PC-9 (cell line): ENCODE measurements at regions of chr1 and their contacts with region 1.

Region 1: GRCh38 chr1:95233737-95234500 is at the start of gene RWDD3:
- DNase-seq: peak; percentile 79 to 94
- H3K4me3 ChIP-seq: peak within 1 kb of the TSS; percentile 94
- H3K27ac ChIP-seq: 0 out of 2 replicates have a peak within 1 kb of the TSS, but pooled peaks have one; percentile 8
- H3K4me1 ChIP-seq: peaks cover 8% of the 10 kb centered on the region; the same call in 1 of the 2 replicates
- H3K27me3 ChIP-seq: no peaks in the 10 kb centered on the region
- CTCF ChIP-seq: peak; percentile 88
- total RNA-seq, gene RWDD3: 11.3 and 13.3 TPM in 2 replicates

Region 2: DNA sequence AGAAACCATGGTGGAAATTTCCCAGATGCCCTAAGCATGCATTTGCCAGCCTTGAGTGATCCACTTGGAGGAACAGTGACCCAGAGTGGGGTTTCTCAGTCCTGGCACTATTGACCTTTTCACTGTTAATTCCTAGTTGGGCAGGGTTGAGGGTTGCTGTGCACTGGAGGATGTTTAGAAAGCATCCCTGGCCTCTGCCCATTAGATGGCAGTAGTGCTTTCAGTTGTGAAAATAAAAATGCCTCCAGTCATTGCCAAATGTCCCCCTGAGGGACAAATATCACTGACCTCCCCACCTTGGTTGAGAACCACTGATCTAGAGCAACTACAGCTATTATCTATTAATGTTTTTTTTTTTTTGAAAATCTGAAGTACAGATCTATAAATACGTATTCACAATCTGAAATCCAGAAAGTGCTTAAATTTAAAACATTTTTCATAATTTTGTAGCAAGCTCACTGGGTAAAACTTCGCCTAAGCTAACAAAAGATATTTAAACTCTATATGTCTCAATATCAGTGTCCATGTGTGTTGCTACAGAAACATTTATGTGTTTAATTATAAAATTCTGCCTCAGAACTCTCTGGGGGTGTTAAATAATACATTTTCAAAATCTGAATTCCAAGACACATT is 719.7 kb before region 1 on chr1:
- CTCF ChIA-PET with region 1: no interaction called
- POLR2A ChIA-PET with region 1: no interaction called
- intact Hi-C with region 1: loop called (anchors 1 kb)
- DNase-seq: peak; percentile 34 to 66
- H3K4me3 ChIP-seq: no peak overlapping the region
- H3K27ac ChIP-seq: peak overlapping the region; percentile 21; the same call in 1 of the 2 replicates
- H3K4me1 ChIP-seq: peaks cover 11% of the 10 kb centered on the region
- H3K27me3 ChIP-seq: no peaks in the 10 kb centered on the region
- CTCF ChIP-seq: peak; percentile 91

Region 3: DNA sequence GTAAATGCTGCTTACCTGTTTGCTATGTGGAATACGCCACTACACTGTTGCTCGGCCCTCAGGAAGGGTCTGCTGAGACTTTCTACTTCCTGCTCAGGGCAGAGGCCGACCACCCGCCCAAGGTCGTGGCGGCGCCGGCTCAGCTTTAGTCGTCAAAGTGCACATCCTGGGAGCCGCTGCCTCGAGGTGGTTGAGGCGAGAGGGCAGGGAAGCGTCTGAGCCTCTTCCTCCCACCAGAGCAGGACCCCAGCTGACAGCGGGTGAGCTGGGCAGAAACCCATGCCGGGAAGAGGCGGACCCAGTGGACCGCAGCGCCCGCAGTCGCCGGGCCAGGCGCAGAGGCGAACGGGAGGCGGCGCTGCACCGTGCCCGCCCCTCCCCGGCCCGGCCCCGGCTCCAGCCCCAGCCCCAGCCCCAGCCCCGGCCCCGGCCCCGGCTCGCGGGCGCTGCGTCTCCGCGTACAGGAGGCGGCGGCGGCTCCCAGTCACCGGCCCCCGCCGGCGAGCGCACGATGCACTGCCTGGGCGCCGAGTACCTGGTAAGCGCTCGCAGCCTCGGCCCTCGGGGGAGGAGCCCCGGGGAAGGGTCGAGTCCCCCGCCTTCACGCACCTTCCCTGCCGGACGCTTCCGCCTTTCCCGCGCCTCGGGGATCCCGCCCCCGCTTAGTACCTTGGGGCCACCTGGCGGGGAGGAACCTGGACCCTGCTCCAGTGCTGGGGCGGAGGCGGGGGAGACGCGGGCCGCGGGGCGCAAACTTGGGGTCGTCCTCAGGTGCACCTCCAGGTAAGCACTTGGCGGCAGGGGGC is 413.8 kb before region 1 on chr1 and contains the start of gene SLC44A3:
- CTCF ChIA-PET with region 1: no interaction called
- POLR2A ChIA-PET with region 1: no interaction called
- intact Hi-C with region 1: loop called (anchors 5 kb)
- DNase-seq: peak; percentile 64 to 65
- H3K4me3 ChIP-seq: peak within 1 kb of the TSS; percentile 96
- H3K27ac ChIP-seq: peak within 1 kb of the TSS; percentile 55
- H3K4me1 ChIP-seq: peaks cover 52% of the 10 kb centered on the region
- H3K27me3 ChIP-seq: no peaks in the 10 kb centered on the region
- CTCF ChIP-seq: no peak; the same call in 1 of the 2 replicates
- total RNA-seq, gene SLC44A3: 11.0 and 17.5 TPM in 2 replicates

Region 4: DNA sequence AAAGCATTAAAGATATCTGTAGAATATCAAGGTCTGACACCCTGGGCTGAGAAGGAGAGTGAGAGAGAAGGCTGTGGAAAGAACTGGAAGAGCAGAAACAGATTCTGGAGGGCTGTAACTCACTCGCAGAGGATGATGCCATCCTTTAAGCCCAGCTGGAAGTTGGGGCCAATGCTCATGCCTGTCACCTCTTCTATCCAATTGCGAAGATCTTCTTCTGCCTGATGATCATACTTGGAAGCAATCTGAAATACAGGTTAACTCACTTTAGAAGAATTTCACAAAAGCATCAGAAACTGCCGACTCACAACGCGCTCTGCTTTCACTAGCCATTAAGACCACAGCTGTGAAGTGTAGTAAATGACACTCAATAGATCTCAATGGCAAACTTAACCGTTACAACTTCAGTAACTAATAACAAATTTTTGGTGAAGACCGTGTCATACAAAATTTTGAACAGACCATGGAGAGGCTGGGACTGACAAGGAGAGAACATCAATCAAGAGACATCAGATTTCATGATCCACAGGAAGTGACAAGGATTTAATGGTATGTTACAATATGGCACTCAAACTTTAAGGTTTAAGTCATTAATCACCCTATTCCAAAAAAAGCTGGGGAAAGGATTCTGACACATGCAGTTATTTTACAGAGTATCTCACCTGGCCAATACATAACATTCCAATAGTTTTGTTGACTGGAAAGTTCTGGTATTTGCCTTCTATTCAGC is 330.5 kb before region 1 on chr1:
- CTCF ChIA-PET with region 1: no interaction called
- POLR2A ChIA-PET with region 1: no interaction called
- intact Hi-C with region 1: no loop called
- DNase-seq: peak in 1 of 2 experiments; percentile 46
- H3K4me3 ChIP-seq: no peak overlapping the region
- H3K27ac ChIP-seq: peak overlapping the region; percentile 28; the same call in 1 of the 2 replicates
- H3K4me1 ChIP-seq: peaks cover 16% of the 10 kb centered on the region; the same call in 1 of the 2 replicates
- H3K27me3 ChIP-seq: no peaks in the 10 kb centered on the region
- CTCF ChIP-seq: no peak

Region 5: GRCh38 chr1:94926915-94927404 is 307.0 kb before region 1 on chr1 and contains the start of gene CNN3:
- CTCF ChIA-PET with region 1: no interaction called
- POLR2A ChIA-PET with region 1: no interaction called
- intact Hi-C with region 1: loop called (anchors 5 kb)
- DNase-seq: peak; percentile 80 to 95
- H3K4me3 ChIP-seq: peak within 1 kb of the TSS; percentile 67
- H3K27ac ChIP-seq: peak within 1 kb of the TSS; percentile 64
- H3K4me1 ChIP-seq: peaks cover 67% of the 10 kb centered on the region
- H3K27me3 ChIP-seq: no peaks in the 10 kb centered on the region
- CTCF ChIP-seq: no peak
- total RNA-seq, gene CNN3: 125 and 135 TPM in 2 replicates

Region 6: GRCh38 chr1:95084317-95085176 is 149.4 kb before region 1 on chr1:
- CTCF ChIA-PET with region 1: interaction called, 14 read pairs
- POLR2A ChIA-PET with region 1: no interaction called
- intact Hi-C with region 1: no loop called
- DNase-seq: peak in 1 of 2 experiments; percentile 66
- H3K4me3 ChIP-seq: no peak overlapping the region
- H3K27ac ChIP-seq: no peak overlapping the region
- H3K4me1 ChIP-seq: peaks cover 24% of the 10 kb centered on the region
- H3K27me3 ChIP-seq: peaks cover 12% of the 10 kb centered on the region
- CTCF ChIP-seq: peak; percentile 83

Region 7: DNA sequence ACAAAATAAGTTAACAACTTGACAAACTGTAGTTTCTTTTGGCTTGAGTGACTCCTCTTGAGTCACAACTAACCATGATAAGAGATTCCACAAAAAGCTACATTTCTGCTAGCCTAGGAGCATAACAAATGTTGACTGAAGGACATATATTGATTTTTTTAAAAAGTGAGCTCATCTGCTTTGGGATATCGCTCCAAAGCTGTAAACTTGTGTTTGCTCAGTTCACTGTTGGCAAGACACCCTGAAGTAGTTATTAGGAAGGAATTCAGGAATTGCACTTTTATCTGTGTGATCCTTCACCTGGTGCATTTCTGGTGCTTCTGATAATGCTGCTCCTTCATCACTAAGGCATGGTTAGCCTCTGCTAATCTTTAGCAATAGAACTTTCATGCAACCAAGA is 23.8 kb after region 1 on chr1:
- CTCF ChIA-PET with region 1: interaction called, 5 read pairs
- POLR2A ChIA-PET with region 1: interaction called, 17 read pairs
- intact Hi-C with region 1: no loop called
- DNase-seq: peak; percentile 8 to 100
- H3K4me3 ChIP-seq: peak overlapping the region; percentile 1; the same call in 1 of the 2 replicates
- H3K27ac ChIP-seq: peak overlapping the region; percentile 56
- H3K4me1 ChIP-seq: peaks cover 36% of the 10 kb centered on the region
- H3K27me3 ChIP-seq: no peaks in the 10 kb centered on the region
- CTCF ChIP-seq: no peak

Region 8: DNA sequence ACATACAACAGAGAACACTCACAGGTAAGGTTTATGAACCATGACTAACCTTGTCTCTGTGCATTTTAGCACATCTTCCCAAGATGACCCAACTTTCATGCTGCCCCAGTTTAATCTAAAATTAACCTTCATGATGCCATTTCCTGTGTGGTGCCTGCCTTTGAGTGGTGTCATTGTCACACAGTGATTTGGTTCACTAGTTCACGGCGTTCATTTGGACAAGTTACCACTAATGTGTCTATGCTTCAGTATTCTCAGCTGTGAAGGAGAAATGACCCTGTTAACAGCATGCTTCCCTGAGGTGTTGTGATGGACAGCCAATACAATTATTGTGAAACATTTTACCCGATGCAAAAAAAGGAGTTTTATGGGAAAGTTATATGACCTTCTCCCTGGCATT is 693.1 kb after region 1 on chr1:
- CTCF ChIA-PET with region 1: no interaction called
- POLR2A ChIA-PET with region 1: no interaction called
- intact Hi-C with region 1: no loop called
- DNase-seq: peak in 1 of 2 experiments; percentile 8
- H3K4me3 ChIP-seq: no peak overlapping the region
- H3K27ac ChIP-seq: no peak overlapping the region
- H3K4me1 ChIP-seq: no peaks in the 10 kb centered on the region
- H3K27me3 ChIP-seq: no peaks in the 10 kb centered on the region
- CTCF ChIP-seq: no peak

Region 9: DNA sequence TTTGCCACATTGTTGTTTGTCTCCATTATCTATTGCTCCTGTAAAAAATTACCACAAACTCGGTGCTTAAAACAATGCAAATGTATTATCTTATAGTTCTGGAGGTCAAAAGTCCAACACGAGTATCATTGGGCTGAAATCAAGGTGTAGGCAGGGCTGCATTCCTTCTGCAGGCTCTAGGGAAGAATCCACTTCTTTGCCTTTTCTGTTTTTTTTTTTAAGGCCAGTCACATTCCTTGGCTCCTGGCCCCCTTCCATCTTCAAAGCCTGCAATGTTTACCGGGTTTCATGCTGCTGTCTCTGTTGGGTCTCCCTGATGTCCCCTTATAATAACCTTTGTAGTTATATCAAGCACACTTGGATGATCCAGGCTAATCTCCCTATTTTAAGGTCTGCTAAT is 1700.4 kb after region 1 on chr1:
- CTCF ChIA-PET with region 1: interaction called, 10 read pairs
- POLR2A ChIA-PET with region 1: no interaction called
- intact Hi-C with region 1: no loop called
- DNase-seq: no peak
- H3K4me3 ChIP-seq: no peak overlapping the region
- H3K27ac ChIP-seq: no peak overlapping the region
- H3K4me1 ChIP-seq: no peaks in the 10 kb centered on the region
- H3K27me3 ChIP-seq: no peaks in the 10 kb centered on the region
- CTCF ChIP-seq: no peak